IMR-90 (cell line): ENCODE measurements at regions of chr20 and their contacts with region 1.

Region 1: DNA sequence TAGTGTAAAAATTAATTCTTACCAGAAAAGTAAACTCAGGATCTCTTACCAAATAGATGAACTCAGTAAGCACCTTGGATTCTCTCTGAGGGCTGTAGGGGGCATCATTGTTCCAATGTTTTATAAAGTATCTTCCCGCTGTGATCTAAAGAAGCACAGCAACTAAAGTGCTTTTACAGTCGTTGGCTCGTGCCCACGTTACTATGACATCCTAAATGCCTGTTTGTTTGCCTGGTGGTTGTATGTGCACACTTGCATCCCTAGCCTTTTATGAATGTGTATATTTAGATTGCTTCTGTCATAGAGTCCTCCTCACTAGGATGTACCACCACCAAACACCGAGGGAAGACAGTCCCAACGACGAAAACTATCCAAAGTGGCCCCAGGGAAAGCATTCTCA is 34.5 kb downstream of the SLX4IP start:
- DNase-seq: peak; percentile 87
- ATAC-seq: peak; percentile 80
- H3K4me3 ChIP-seq: no peak overlapping the region
- H3K27ac ChIP-seq: no peak overlapping the region
- H3K4me1 ChIP-seq: peaks cover 4% of the 10 kb centered on the region
- H3K27me3 ChIP-seq: no peaks in the 10 kb centered on the region
- CTCF ChIP-seq: peak; percentile 68
- POLR2A ChIP-seq: no peak
- RAD21 ChIP-seq: peak; percentile 77

Region 2: GRCh38 chr20:10536531-10536930 is 66.9 kb after region 1 on chr20:
- CTCF ChIA-PET with region 1: no interaction called
- POLR2A ChIA-PET with region 1: no interaction called
- dilution Hi-C with region 1: no loop called
- in situ Hi-C with region 1: no loop called
- intact Hi-C with region 1: loop called (anchors 2 kb)
- DNase-seq: peak; percentile 68
- ATAC-seq: peak; percentile 31
- H3K4me3 ChIP-seq: no peak overlapping the region
- H3K27ac ChIP-seq: peak overlapping the region; percentile 4; the same call in 1 of the 2 replicates
- H3K4me1 ChIP-seq: peaks cover 17% of the 10 kb centered on the region
- H3K27me3 ChIP-seq: no peaks in the 10 kb centered on the region
- CTCF ChIP-seq: peak; percentile 60
- POLR2A ChIP-seq: no peak
- RAD21 ChIP-seq: peak; percentile 62

Region 3: GRCh38 chr20:10558635-10559187 is 89.1 kb after region 1 on chr20:
- CTCF ChIA-PET with region 1: no interaction called
- POLR2A ChIA-PET with region 1: no interaction called
- dilution Hi-C with region 1: no loop called
- in situ Hi-C with region 1: no loop called
- intact Hi-C with region 1: loop called (anchors 2 kb)
- DNase-seq: peak; percentile 99
- ATAC-seq: peak; percentile 89
- H3K4me3 ChIP-seq: peak overlapping the region; percentile 1; the same call in 1 of the 2 replicates
- H3K27ac ChIP-seq: peak overlapping the region; percentile 88
- H3K4me1 ChIP-seq: peaks cover 15% of the 10 kb centered on the region
- H3K27me3 ChIP-seq: no peaks in the 10 kb centered on the region
- CTCF ChIP-seq: peak; percentile 28; the same call in 1 of the 2 replicates
- POLR2A ChIP-seq: 0 out of 2 replicates have a peak, but pooled peaks have one; percentile 21
- RAD21 ChIP-seq: no peak; the same call in none of the 2 replicates

Region 4: GRCh38 chr20:10647465-10647864 is 177.9 kb after region 1 on chr20:
- CTCF ChIA-PET with region 1: no interaction called
- POLR2A ChIA-PET with region 1: no interaction called
- dilution Hi-C with region 1: no loop called
- in situ Hi-C with region 1: no loop called
- intact Hi-C with region 1: loop called (anchors 5 kb)
- DNase-seq: no peak
- ATAC-seq: no peak
- H3K4me3 ChIP-seq: no peak overlapping the region
- H3K27ac ChIP-seq: no peak overlapping the region
- H3K4me1 ChIP-seq: peaks cover 27% of the 10 kb centered on the region
- H3K27me3 ChIP-seq: no peaks in the 10 kb centered on the region
- CTCF ChIP-seq: no peak
- POLR2A ChIP-seq: no peak
- RAD21 ChIP-seq: peak; percentile 8; the same call in 1 of the 2 replicates

Region 5: GRCh38 chr20:11204926-11205768 is 735.5 kb after region 1 on chr20:
- CTCF ChIA-PET with region 1: no interaction called
- POLR2A ChIA-PET with region 1: no interaction called
- dilution Hi-C with region 1: no loop called
- in situ Hi-C with region 1: no loop called
- intact Hi-C with region 1: loop called (anchors 5 kb)
- DNase-seq: peak; percentile 71
- ATAC-seq: peak; percentile 90
- H3K4me3 ChIP-seq: no peak overlapping the region
- H3K27ac ChIP-seq: no peak overlapping the region
- H3K4me1 ChIP-seq: no peaks in the 10 kb centered on the region; the same call in none of the 2 replicates
- H3K27me3 ChIP-seq: no peaks in the 10 kb centered on the region
- CTCF ChIP-seq: peak; percentile 72
- POLR2A ChIP-seq: no peak
- RAD21 ChIP-seq: peak; percentile 77

Region 6: DNA sequence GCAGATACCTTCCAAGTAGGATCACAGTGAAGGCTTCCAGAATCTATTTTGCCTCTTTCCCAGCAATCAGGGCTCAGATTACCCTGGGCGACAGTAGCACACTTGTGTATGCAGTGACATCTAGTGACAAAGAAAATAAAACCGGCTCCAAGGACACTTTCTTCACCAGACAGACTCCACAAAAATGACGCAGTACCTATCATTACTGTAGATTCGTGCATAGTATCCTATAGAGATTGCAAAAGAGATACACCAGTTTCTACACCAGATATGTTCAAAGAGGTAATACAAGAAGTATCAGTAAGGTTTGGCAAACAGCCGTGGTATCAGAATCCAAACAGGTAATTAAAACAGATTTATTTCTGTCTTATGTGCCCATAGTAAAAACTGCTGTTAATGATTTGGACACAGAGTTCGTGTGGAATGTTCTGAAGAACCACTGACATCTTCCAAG is 804.6 kb after region 1 on chr20:
- CTCF ChIA-PET with region 1: no interaction called
- POLR2A ChIA-PET with region 1: no interaction called
- dilution Hi-C with region 1: no loop called
- in situ Hi-C with region 1: loop called (anchors 10 kb)
- intact Hi-C with region 1: loop called (anchors 5 kb)
- DNase-seq: peak; percentile 79
- ATAC-seq: peak; percentile 94
- H3K4me3 ChIP-seq: no peak overlapping the region
- H3K27ac ChIP-seq: no peak overlapping the region
- H3K4me1 ChIP-seq: no peaks in the 10 kb centered on the region
- H3K27me3 ChIP-seq: no peaks in the 10 kb centered on the region
- CTCF ChIP-seq: peak; percentile 78
- POLR2A ChIP-seq: no peak
- RAD21 ChIP-seq: peak; percentile 90